PC-9 (cell line): ENCODE measurements at regions of chr7 and their contacts with region 1.

Region 1: DNA sequence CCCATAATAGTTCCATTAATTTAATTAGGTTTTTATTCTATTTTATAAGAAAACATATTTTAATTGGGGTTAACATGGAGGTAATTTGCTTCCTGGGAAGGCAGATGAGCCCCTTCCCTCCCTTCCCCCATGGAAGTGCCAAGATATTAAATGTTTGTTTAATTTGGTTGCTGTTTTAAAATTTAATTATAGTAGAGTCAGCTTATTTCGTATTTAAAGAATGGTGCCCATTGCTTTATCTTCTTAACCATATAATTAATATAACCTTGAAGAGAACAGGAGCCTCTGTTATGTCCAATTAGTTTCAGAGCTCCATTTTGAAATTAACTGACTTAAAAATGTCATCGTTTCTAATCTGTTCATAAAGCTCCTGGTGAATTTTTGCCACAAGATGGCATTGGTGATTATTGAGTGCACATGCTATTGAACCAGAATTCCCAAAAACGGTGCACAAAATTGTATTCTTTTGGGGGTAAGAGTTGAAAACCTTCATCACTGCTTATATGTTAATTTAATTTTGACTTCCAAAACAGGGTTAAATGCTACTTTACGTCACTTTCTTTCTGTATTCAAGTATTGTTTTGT is 26.0 kb downstream of the KLHDC10 start:
- DNase-seq: no peak
- H3K4me3 ChIP-seq: no peak overlapping the region
- H3K27ac ChIP-seq: no peak overlapping the region
- H3K4me1 ChIP-seq: 0 out of 2 replicates have a peak, but pooled peaks cover 9% of the 10 kb centered on the region
- H3K27me3 ChIP-seq: no peaks in the 10 kb centered on the region
- CTCF ChIP-seq: peak; percentile 34; the same call in 1 of the 2 replicates

Region 2: GRCh38 chr7:129454249-129454551 is 642.1 kb before region 1 on chr7:
- CTCF ChIA-PET with region 1: no interaction called
- POLR2A ChIA-PET with region 1: no interaction called
- intact Hi-C with region 1: no loop called
- DNase-seq: peak; percentile 78 to 99
- H3K4me3 ChIP-seq: 0 out of 2 replicates have a peak overlapping the region, but pooled peaks have one; percentile 7
- H3K27ac ChIP-seq: peak overlapping the region; percentile 95
- H3K4me1 ChIP-seq: peaks cover 46% of the 10 kb centered on the region
- H3K27me3 ChIP-seq: no peaks in the 10 kb centered on the region
- CTCF ChIP-seq: no peak

Region 3: DNA sequence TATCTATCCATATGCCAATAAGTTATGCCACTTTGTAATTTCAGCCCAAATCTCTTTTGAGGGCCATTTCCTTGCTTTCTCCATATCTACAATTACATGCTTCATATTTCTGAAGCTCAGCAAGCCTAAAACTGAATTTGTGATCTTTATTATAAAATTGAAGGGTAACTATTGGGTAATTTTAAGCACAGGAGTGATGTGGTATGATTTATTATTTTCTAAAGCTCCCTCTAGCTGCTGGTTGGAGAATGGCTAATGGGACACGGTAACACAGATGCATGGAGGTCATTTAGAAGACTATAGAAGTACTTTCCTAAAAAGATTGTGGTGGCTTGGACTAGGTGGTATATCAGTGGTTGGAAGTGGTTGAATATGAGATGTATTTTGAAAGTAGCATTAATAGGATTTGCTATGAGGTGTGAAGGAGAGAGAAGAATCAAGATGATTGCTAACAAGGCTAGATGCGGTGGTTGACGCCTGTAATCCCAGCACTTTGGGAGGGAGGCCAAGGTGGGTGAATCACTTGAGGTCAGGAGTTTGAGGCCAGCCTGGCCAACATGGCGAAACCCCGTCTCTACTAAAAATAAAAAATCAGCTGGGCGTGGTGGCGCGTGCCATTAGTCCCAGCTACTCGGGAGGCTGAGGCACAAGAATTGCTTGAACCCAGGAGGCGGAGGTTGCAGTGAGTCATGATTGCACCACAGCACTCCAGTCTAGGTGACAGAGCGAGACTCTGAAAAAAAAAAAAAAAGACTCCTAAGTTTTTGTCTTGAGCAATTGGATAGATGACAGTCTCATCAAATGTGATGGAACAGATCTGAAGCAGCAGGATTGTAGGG is 12.1 kb before region 1 on chr7:
- CTCF ChIA-PET with region 1: interaction called, 23 read pairs
- POLR2A ChIA-PET with region 1: no interaction called
- intact Hi-C with region 1: no loop called
- DNase-seq: no peak
- H3K4me3 ChIP-seq: no peak overlapping the region
- H3K27ac ChIP-seq: no peak overlapping the region
- H3K4me1 ChIP-seq: peaks cover 1% of the 10 kb centered on the region; the same call in 1 of the 2 replicates
- H3K27me3 ChIP-seq: no peaks in the 10 kb centered on the region
- CTCF ChIP-seq: peak; percentile 75